Dendritic cell treated with granulocyte-macrophage colony-stimulating factor and Interleukin-4, amounts not matched to agents 40 ng/mL and 50 ng/mL, for 4 days (primary cell): ENCODE measurements at regions of chr15 and their contacts with region 1.

Region 1: GRCh38 chr15:90954712-90955671 is at the start of gene RCCD1:
- H3K4me3 Mint-ChIP-seq: peak within 1 kb of the TSS; percentile 88
- H3K27ac Mint-ChIP-seq: peak within 1 kb of the TSS; percentile 98
- H3K4me1 Mint-ChIP-seq: peaks cover 36% of the 10 kb centered on the region
- H3K27me3 Mint-ChIP-seq: no peaks in the 10 kb centered on the region

Region 2: GRCh38 chr15:90519688-90520087 is 435.3 kb before region 1 on chr15:
- intact Hi-C with region 1: no loop called
- H3K4me3 Mint-ChIP-seq: no peak overlapping the region
- H3K27ac Mint-ChIP-seq: no peak overlapping the region
- H3K4me1 Mint-ChIP-seq: peaks cover 9% of the 10 kb centered on the region
- H3K27me3 Mint-ChIP-seq: peaks cover 1% of the 10 kb centered on the region

Region 3: DNA sequence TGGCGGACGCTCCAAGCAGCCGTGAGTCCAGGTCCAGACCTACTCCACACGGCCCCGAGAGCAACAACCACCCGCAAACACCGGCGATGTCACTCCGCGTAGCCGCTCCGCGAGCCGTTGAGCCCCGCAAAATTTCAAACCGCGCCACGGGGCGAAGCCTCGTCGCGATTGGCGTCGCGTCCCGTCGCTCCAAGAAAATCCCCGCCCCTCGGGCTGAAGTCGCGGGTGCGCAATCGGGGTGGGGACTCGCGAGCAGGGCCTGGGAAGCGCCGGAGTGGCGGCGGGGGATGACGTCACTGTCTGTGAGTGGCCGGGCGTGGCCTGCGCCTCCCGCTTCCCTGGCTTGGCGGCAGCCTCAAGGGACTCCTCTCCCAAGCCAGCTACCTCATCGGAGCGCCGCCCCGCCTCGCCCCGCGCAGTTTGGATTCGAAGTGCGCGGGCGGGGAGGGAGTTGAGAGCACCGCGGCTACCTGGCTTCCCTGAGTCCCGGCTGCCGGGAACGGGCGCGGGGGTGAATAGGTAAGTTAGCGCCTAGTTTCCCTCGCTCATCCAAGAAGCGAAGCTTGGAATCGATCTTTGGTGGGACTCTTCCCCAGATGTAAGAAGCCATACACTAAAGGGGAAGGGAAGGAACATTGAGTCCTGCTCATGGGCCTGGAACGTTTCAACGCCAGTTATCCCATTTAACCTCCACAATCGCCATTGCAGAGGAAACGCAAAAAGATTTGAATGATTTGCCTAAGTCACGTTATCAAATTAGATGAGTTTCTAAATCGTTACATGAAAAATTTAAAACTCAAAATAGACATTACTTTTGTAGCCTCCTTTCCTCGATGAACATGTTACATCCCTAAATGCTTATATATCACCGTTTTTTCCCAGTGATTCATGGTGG is 39.7 kb after region 1 on chr15 and contains the start of gene PRC1:
- intact Hi-C with region 1: loop called (anchors 2 kb)
- H3K4me3 Mint-ChIP-seq: peak within 1 kb of the TSS; percentile 100
- H3K27ac Mint-ChIP-seq: peak within 1 kb of the TSS; percentile 96
- H3K4me1 Mint-ChIP-seq: peaks cover 13% of the 10 kb centered on the region
- H3K27me3 Mint-ChIP-seq: no peaks in the 10 kb centered on the region

Region 4: DNA sequence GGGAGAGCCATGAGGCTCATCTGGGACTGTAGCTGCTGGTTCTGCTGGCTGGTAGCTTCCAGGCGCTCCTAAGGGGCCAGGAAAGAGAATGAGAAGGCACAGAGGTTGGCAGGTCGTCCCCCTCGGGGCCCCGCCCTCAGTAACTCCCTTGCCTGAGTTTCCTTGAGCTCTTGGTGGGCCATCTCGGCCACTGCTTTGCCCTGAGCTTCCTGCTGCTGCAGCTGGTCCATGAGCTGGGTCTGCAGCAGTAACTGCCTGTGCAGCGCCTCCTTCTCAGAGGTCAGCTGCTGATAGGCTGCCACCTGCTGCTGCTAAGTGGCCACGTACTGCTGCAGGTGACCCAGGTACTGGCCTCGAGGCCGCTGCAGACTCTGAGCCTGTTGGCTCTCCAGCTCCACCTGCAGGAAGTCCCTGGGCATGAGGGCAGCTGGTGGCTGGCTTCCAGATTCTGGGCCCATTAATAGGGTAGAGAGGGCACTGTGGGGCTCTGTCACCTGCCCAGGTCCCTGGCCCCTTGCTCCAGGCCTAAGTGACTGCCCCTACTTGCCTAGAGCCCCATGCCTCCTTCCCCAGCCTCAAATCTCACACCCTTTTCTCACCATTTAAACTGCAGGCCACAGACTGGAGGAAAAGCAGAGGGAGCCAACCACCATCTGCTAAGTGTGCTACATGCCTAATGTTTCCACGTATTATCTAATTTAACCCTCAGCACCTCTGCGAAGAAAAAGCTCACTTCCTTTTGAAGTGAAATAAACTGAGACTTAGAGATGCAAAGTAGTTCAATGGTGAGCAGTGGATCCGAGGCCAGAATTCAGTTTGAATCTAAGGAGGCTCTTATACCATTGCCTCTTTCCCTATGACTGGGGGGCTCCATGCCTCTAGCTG is 78.2 kb after region 1 on chr15:
- intact Hi-C with region 1: loop called (anchors 5 kb)
- H3K4me3 Mint-ChIP-seq: no peak overlapping the region
- H3K27ac Mint-ChIP-seq: no peak overlapping the region
- H3K4me1 Mint-ChIP-seq: peaks cover 6% of the 10 kb centered on the region
- H3K27me3 Mint-ChIP-seq: peaks cover 21% of the 10 kb centered on the region

Region 5: GRCh38 chr15:91049378-91050127 is 94.6 kb after region 1 on chr15:
- intact Hi-C with region 1: loop called (anchors 1 kb)
- H3K4me3 Mint-ChIP-seq: no peak overlapping the region
- H3K27ac Mint-ChIP-seq: no peak overlapping the region
- H3K4me1 Mint-ChIP-seq: peaks cover 19% of the 10 kb centered on the region
- H3K27me3 Mint-ChIP-seq: peaks cover 32% of the 10 kb centered on the region

Region 6: GRCh38 chr15:91271565-91272153 is 316.7 kb after region 1 on chr15:
- intact Hi-C with region 1: loop called (anchors 10 kb)
- H3K4me3 Mint-ChIP-seq: no peak overlapping the region
- H3K27ac Mint-ChIP-seq: no peak overlapping the region
- H3K4me1 Mint-ChIP-seq: no peaks in the 10 kb centered on the region
- H3K27me3 Mint-ChIP-seq: peaks cover 17% of the 10 kb centered on the region